Dendritic cell treated with granulocyte-macrophage colony-stimulating factor and Interleukin-4, amounts not matched to agents 40 ng/mL and 50 ng/mL, for 4 days (primary cell): ENCODE measurements at regions of chr2 and their contacts with region 1.

Region 1: DNA sequence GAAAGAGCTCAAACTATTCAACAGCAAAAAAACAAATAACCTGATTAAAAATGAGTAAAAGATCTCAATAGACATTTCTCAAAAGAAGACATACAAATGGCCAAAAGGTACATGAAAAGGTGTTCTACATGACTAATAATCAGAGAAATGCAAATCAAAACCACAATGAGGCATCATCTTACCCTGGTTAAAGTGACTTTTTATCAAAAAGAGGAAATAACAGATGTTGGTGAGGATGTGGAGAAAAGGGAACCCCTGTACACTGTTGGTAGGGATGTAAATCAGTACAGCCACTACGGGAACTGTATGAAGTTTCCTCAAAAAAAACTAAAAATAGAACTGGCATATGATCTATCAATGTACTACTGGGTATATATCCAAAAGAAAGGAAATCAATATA is 39.8 kb upstream of the TMEM163 start:
- H3K4me3 Mint-ChIP-seq: no peak overlapping the region
- H3K27ac Mint-ChIP-seq: peak overlapping the region; percentile 67
- H3K4me1 Mint-ChIP-seq: peaks cover 18% of the 10 kb centered on the region
- H3K27me3 Mint-ChIP-seq: peaks cover 31% of the 10 kb centered on the region

Region 2: GRCh38 chr2:134745023-134745422 is 13.6 kb before region 1 on chr2:
- intact Hi-C with region 1: loop called (anchors 2 kb)
- H3K4me3 Mint-ChIP-seq: no peak overlapping the region
- H3K27ac Mint-ChIP-seq: no peak overlapping the region
- H3K4me1 Mint-ChIP-seq: peaks cover 34% of the 10 kb centered on the region
- H3K27me3 Mint-ChIP-seq: peaks cover 27% of the 10 kb centered on the region